Aorta (tissue), 5 donors: ENCODE measurements at regions of chr11 and their contacts with region 1.

Region 1: GRCh38 chr11:11451501-11452005 is 98.5 kb upstream of the CSNK2A3 start:
- DNase-seq: no peak
- ATAC-seq: no peak
- H3K4me3 ChIP-seq: no peak overlapping the region
- H3K27ac ChIP-seq: peak overlapping the region in 1 of 2 donors; percentile 68
- H3K4me1 ChIP-seq: peaks cover 0 to 1% of the 10 kb centered on the region in 2 donors
- H3K27me3 ChIP-seq: no peaks in the 10 kb centered on the region

Region 2: GRCh38 chr11:11407065-11407762 is 44.3 kb before region 1 on chr11:
- intact Hi-C with region 1: loop called in 1 of 2 experiments (anchors 5 kb)
- DNase-seq: no peak
- ATAC-seq: peak; percentile 64
- H3K4me3 ChIP-seq: no peak overlapping the region
- H3K27ac ChIP-seq: peak overlapping the region; percentile 79
- H3K4me1 ChIP-seq: peaks cover 2 to 10% of the 10 kb centered on the region in 2 donors
- H3K27me3 ChIP-seq: no peaks in the 10 kb centered on the region